Right ventricle myocardium inferior (tissue), 1 donor: ENCODE measurements at regions of chr20 and their contacts with region 1.

Region 1: GRCh38 chr20:42721923-42722322 is 467.8 kb downstream of the PTPRT start:
- DNase-seq: no peak
- ATAC-seq: no peak

Region 2: GRCh38 chr20:42635699-42636411 is 86.1 kb before region 1 on chr20:
- intact Hi-C with region 1: no loop called
- DNase-seq: no peak
- ATAC-seq: no peak

Region 3: DNA sequence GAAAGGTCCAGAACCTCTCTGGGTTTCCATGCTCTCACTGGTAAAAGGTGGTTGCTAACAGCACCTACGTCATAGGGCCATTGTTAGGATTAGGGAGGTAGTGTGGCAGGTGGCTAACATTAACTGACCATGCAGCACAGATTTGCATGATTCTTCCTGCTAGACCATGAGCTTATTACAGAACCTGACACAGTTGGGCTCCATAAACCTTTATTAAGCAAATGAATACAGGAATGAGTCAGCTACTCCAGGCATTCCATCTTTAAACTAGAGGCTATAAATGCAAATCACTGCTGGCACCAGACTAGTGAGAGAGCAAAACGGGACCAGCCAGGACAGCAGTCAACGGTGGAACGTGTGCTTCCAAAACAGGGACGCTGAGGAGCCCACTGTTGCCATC is 27.6 kb after region 1 on chr20:
- intact Hi-C with region 1: loop called (anchors 1 kb)
- DNase-seq: no peak
- ATAC-seq: no peak